Activated T-helper 1 cell treated with anti-CD3 and anti-CD28 coated beads, Interleukin-12 subunit alpha, Interleukin-12 subunit beta, Interleukin-2, Interleukin-4 antibody, amounts not matched to agents 30 ng/mL and 10 ng/mL and 1 ng/mL, durations not matched to agents 14 hours and 24 hours and 36 hours (primary cell): ENCODE measurements at regions of chr2 and their contacts with region 1.

Region 1: DNA sequence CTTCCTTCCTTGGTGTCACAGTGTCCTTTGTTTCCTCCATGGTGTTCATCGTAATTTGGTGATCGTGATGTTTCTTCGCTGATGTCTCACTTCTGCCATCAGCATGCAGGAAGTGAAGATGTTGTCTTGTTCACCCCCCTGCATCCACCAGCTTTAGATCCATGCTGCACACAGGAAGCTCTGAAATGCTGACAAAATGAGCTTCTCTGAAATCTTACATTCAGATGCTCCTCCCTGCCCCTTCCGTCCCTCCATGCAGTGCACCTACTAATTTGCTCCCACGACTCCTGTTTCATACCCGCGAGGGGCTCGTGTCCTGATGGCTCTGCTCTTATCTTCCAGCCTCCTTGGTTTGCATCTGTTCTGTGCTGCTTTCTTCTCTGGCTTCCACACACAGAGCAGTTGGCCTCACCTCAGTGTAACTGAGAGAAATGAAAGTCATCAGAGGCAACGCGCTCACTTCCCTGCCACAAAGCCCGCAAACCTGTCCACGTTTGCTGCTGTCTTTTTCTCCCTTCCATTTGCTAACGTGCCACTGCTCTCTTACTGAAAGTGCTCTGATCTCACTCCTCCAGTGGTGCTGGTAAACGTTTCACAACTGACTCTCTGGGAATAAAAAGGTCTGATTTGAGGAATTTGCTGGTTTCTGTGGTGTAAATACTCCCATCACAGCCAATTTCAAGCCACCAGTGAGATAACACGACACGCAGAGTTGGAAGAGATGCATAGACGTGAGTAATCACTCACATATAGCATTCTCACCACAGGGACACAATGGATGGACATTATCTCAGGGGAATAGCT is 41.0 kb upstream of the MGAT4A start:
- DNase-seq: peak; percentile 63
- H3K4me3 Mint-ChIP-seq: peak overlapping the region; percentile 92
- H3K27ac Mint-ChIP-seq: peak overlapping the region; percentile 99
- H3K4me1 Mint-ChIP-seq: peaks cover 64% of the 10 kb centered on the region
- H3K27me3 Mint-ChIP-seq: peaks cover 2% of the 10 kb centered on the region

Region 2: GRCh38 chr2:98465456-98466226 is 306.3 kb before region 1 on chr2:
- intact Hi-C with region 1: loop called (anchors 10 kb)
- DNase-seq: peak; percentile 70
- H3K4me3 Mint-ChIP-seq: peak overlapping the region; percentile 84
- H3K27ac Mint-ChIP-seq: peak overlapping the region; percentile 99
- H3K4me1 Mint-ChIP-seq: peaks cover 83% of the 10 kb centered on the region
- H3K27me3 Mint-ChIP-seq: no peaks in the 10 kb centered on the region

Region 3: DNA sequence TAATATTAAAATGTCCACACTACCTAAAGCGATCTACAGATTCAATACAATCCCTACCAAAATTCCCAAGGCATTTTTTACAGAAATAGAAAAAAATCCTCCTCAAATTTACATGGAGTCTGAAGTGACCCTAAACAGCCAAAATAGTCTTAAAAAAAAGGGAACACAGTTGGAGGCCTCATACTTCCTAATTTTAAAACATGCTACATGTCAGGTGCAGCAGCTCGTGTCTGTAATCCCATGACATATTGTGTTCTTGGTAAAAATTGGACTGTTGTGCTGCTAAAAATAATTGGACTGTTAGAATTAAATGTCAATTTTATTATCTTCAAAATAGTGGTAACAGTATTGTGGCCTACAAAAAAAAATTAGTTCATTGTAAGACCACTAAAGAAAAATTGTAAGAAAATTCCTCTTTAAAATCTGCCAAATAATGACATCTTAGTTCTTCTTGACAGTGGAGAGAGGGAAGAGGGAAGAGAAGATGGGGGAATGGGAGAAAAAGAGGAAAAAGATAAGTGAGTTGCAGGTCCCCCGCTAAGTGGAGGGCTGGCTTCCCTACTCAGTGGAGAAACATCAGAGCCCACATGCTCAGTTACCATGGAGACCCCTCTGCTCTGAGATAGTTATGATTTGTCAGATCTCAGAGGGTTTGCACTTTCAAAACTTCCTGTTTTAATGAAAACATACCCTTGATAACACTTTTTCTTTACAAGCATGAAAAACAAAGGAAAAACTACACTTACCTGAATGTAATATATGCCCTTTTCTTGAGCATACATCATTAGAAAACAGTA is 117.0 kb before region 1 on chr2:
- intact Hi-C with region 1: loop called (anchors 1 kb)
- DNase-seq: no peak
- H3K4me3 Mint-ChIP-seq: peak overlapping the region; percentile 65
- H3K27ac Mint-ChIP-seq: peak overlapping the region; percentile 84
- H3K4me1 Mint-ChIP-seq: peaks cover 91% of the 10 kb centered on the region
- H3K27me3 Mint-ChIP-seq: no peaks in the 10 kb centered on the region

Region 4: GRCh38 chr2:98736464-98736889 is 35.4 kb before region 1 on chr2:
- intact Hi-C with region 1: loop called (anchors 1 kb)
- DNase-seq: peak; percentile 26
- H3K4me3 Mint-ChIP-seq: peak overlapping the region; percentile 57
- H3K27ac Mint-ChIP-seq: peak overlapping the region; percentile 69
- H3K4me1 Mint-ChIP-seq: peaks cover 66% of the 10 kb centered on the region
- H3K27me3 Mint-ChIP-seq: peaks cover 2% of the 10 kb centered on the region

Region 5: GRCh38 chr2:98828793-98829371 is 57.0 kb after region 1 on chr2:
- intact Hi-C with region 1: loop called (anchors 2 kb)
- DNase-seq: no peak
- H3K4me3 Mint-ChIP-seq: peak overlapping the region; percentile 37
- H3K27ac Mint-ChIP-seq: peak overlapping the region; percentile 4
- H3K4me1 Mint-ChIP-seq: peaks cover 66% of the 10 kb centered on the region
- H3K27me3 Mint-ChIP-seq: peaks cover 2% of the 10 kb centered on the region